GM12878 (cell line): ENCODE measurements at regions of chr4 and their contacts with region 1.

Region 1: GRCh38 chr4:180664766-180665368 is 1578.3 kb upstream of the TENM3 start:
- DNase-seq: peak; percentile 25
- ATAC-seq: peak; percentile 93
- H3K4me3 ChIP-seq: no peak overlapping the region
- H3K27ac ChIP-seq: no peak overlapping the region
- H3K4me1 ChIP-seq: no peaks in the 10 kb centered on the region
- H3K27me3 ChIP-seq: no peaks in the 10 kb centered on the region
- CTCF ChIP-seq: peak; percentile 66 to 78 (median 69); a peak in 5 of 6 replicates
- EP300 ChIP-seq: no peak
- POLR2A ChIP-seq: no peak
- RAD21 ChIP-seq: peak; percentile 64

Region 2: DNA sequence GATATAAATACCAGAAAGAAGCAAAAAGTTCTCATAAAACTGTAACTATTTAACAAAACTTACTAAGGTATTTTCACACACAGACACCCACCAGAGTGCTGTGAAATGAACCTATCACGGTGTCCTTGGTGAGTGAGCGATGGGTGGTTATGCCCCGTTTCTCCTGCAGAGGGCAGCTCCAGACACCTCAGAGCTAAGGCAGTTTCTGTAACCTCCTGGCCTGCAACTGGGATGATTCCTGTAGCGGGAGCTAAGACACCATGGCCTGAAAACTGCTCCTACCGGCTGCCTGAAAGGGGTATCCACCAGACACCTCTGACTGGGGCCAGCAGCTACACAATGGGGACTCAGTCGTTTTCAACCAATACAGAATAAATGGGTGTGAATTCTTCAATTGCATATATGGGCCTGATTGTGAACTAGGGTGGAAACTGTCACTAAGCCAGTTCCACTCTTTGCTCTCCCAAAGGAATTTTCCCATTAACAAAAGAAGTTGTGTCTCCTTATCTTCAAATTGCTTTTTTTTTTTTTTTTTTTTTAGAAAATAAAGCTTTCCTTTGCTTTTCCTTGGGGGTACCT is 797.5 kb before region 1 on chr4:
- CTCF ChIA-PET with region 1: interaction called, 14 read pairs
- POLR2A ChIA-PET with region 1: no interaction called
- RAD21 ChIA-PET with region 1: no interaction called
- SMC1A ChIA-PET with region 1: interaction called, 6 read pairs
- in situ Hi-C with region 1: loop called (anchors 10 kb)
- intact Hi-C with region 1: loop called (anchors 5 kb)
- DNase-seq: peak; percentile 16
- ATAC-seq: peak; percentile 99
- H3K4me3 ChIP-seq: no peak overlapping the region
- H3K27ac ChIP-seq: no peak overlapping the region
- H3K4me1 ChIP-seq: no peaks in the 10 kb centered on the region
- H3K27me3 ChIP-seq: no peaks in the 10 kb centered on the region
- CTCF ChIP-seq: peak; percentile 80 to 93 (median 91)
- EP300 ChIP-seq: no peak
- POLR2A ChIP-seq: no peak
- RAD21 ChIP-seq: peak; percentile 88

Region 3: GRCh38 chr4:180394312-180394711 is 270.6 kb before region 1 on chr4:
- CTCF ChIA-PET with region 1: no interaction called
- POLR2A ChIA-PET with region 1: no interaction called
- RAD21 ChIA-PET with region 1: no interaction called
- SMC1A ChIA-PET with region 1: no interaction called
- in situ Hi-C with region 1: no loop called
- intact Hi-C with region 1: no loop called
- DNase-seq: no peak
- ATAC-seq: no peak
- H3K4me3 ChIP-seq: no peak overlapping the region
- H3K27ac ChIP-seq: no peak overlapping the region
- H3K4me1 ChIP-seq: no peaks in the 10 kb centered on the region
- H3K27me3 ChIP-seq: no peaks in the 10 kb centered on the region
- CTCF ChIP-seq: no peak
- EP300 ChIP-seq: no peak
- POLR2A ChIP-seq: no peak
- RAD21 ChIP-seq: no peak

Region 4: GRCh38 chr4:180434131-180434895 is 230.6 kb before region 1 on chr4:
- CTCF ChIA-PET with region 1: no interaction called
- POLR2A ChIA-PET with region 1: no interaction called
- RAD21 ChIA-PET with region 1: no interaction called
- SMC1A ChIA-PET with region 1: no interaction called
- in situ Hi-C with region 1: no loop called
- intact Hi-C with region 1: no loop called
- DNase-seq: peak; percentile 16
- ATAC-seq: no peak; the same call in 2 of the 3 replicates
- H3K4me3 ChIP-seq: no peak overlapping the region
- H3K27ac ChIP-seq: no peak overlapping the region
- H3K4me1 ChIP-seq: no peaks in the 10 kb centered on the region
- H3K27me3 ChIP-seq: no peaks in the 10 kb centered on the region
- CTCF ChIP-seq: no peak
- EP300 ChIP-seq: no peak
- POLR2A ChIP-seq: no peak
- RAD21 ChIP-seq: no peak

Region 5: GRCh38 chr4:180449395-180449956 is 215.4 kb before region 1 on chr4:
- CTCF ChIA-PET with region 1: interaction called, 9 read pairs
- POLR2A ChIA-PET with region 1: no interaction called
- RAD21 ChIA-PET with region 1: interaction called, 7 read pairs
- SMC1A ChIA-PET with region 1: interaction called, 7 read pairs
- in situ Hi-C with region 1: no loop called
- intact Hi-C with region 1: loop called (anchors 2 kb)
- DNase-seq: no peak
- ATAC-seq: peak; percentile 95
- H3K4me3 ChIP-seq: no peak overlapping the region
- H3K27ac ChIP-seq: no peak overlapping the region
- H3K4me1 ChIP-seq: no peaks in the 10 kb centered on the region
- H3K27me3 ChIP-seq: no peaks in the 10 kb centered on the region
- CTCF ChIP-seq: peak; percentile 44 to 65 (median 61); a peak in 5 of 6 replicates
- EP300 ChIP-seq: no peak
- POLR2A ChIP-seq: no peak
- RAD21 ChIP-seq: peak; percentile 55

Region 6: DNA sequence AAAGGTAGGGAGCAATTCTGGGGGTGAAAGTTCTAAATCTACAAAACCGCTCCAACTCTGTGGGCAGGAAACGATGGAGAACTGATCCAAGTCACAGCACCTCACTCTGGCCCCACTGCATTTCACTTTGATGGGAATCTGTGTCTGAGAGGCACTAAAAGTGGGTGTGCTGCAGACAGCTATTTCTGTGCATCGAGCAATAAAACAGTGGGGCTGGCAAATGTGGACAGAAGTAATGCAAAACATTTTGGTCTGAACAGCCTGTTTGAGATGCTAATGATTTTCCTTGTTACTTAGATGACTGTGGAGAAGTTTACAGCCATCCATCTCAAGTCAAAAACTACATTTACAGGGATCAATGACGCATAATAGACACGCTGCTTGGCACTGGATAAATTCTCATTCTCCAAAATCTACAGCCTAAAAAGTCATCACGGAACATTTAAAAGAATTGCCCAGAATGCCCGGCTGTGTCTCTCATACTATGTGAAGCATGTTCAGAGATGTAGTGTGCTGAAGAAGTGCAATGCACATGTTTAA is 93.3 kb before region 1 on chr4:
- CTCF ChIA-PET with region 1: no interaction called
- POLR2A ChIA-PET with region 1: no interaction called
- RAD21 ChIA-PET with region 1: no interaction called
- SMC1A ChIA-PET with region 1: no interaction called
- in situ Hi-C with region 1: no loop called
- intact Hi-C with region 1: no loop called
- DNase-seq: no peak
- ATAC-seq: no peak
- H3K4me3 ChIP-seq: no peak overlapping the region
- H3K27ac ChIP-seq: no peak overlapping the region
- H3K4me1 ChIP-seq: no peaks in the 10 kb centered on the region
- H3K27me3 ChIP-seq: no peaks in the 10 kb centered on the region
- CTCF ChIP-seq: no peak
- EP300 ChIP-seq: no peak
- POLR2A ChIP-seq: no peak
- RAD21 ChIP-seq: no peak

Region 7: GRCh38 chr4:180650273-180650672 is 14.6 kb before region 1 on chr4:
- CTCF ChIA-PET with region 1: interaction called, 52 read pairs
- POLR2A ChIA-PET with region 1: no interaction called
- RAD21 ChIA-PET with region 1: interaction called, 10 read pairs
- SMC1A ChIA-PET with region 1: interaction called, 5 read pairs
- in situ Hi-C with region 1: no loop called
- intact Hi-C with region 1: no loop called
- DNase-seq: no peak
- ATAC-seq: peak; percentile 93
- H3K4me3 ChIP-seq: no peak overlapping the region
- H3K27ac ChIP-seq: no peak overlapping the region
- H3K4me1 ChIP-seq: no peaks in the 10 kb centered on the region
- H3K27me3 ChIP-seq: no peaks in the 10 kb centered on the region
- CTCF ChIP-seq: no peak
- EP300 ChIP-seq: no peak
- POLR2A ChIP-seq: no peak
- RAD21 ChIP-seq: no peak

Region 8: DNA sequence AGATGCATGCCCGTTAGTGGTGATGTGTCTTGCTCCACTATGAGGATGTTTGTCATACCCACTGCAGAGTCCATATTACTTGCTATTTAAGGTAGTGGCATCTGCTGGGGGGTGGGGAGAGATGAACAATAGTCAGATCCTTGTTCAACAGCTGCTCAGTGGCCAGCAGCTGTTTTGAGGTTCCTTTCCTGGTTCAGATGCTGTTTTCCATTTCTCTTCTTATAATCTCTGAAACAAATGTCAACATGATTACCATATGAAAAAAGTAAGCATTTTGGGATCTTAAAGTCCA is 10.4 kb after region 1 on chr4:
- CTCF ChIA-PET with region 1: interaction called, 14 read pairs
- POLR2A ChIA-PET with region 1: no interaction called
- RAD21 ChIA-PET with region 1: no interaction called
- SMC1A ChIA-PET with region 1: interaction called, 7 read pairs
- in situ Hi-C with region 1: no loop called
- intact Hi-C with region 1: no loop called
- DNase-seq: no peak
- ATAC-seq: no peak
- H3K4me3 ChIP-seq: no peak overlapping the region
- H3K27ac ChIP-seq: no peak overlapping the region
- H3K4me1 ChIP-seq: no peaks in the 10 kb centered on the region
- H3K27me3 ChIP-seq: no peaks in the 10 kb centered on the region
- CTCF ChIP-seq: no peak
- EP300 ChIP-seq: no peak
- POLR2A ChIP-seq: no peak
- RAD21 ChIP-seq: no peak

Region 9: GRCh38 chr4:180840142-180840541 is 175.3 kb after region 1 on chr4:
- CTCF ChIA-PET with region 1: interaction called, 4 read pairs
- POLR2A ChIA-PET with region 1: no interaction called
- RAD21 ChIA-PET with region 1: no interaction called
- SMC1A ChIA-PET with region 1: no interaction called
- in situ Hi-C with region 1: no loop called
- intact Hi-C with region 1: loop called (anchors 10 kb)
- DNase-seq: no peak
- ATAC-seq: peak; percentile 73
- H3K4me3 ChIP-seq: no peak overlapping the region
- H3K27ac ChIP-seq: no peak overlapping the region
- H3K4me1 ChIP-seq: no peaks in the 10 kb centered on the region
- H3K27me3 ChIP-seq: no peaks in the 10 kb centered on the region
- CTCF ChIP-seq: peak in 2 of 3 experiments; percentile 9 to 14; a peak in 1 of 6 replicates
- EP300 ChIP-seq: no peak
- POLR2A ChIP-seq: no peak
- RAD21 ChIP-seq: no peak

Region 10: GRCh38 chr4:181528570-181529184 is 863.8 kb after region 1 on chr4:
- CTCF ChIA-PET with region 1: interaction called, 10 read pairs
- POLR2A ChIA-PET with region 1: no interaction called
- RAD21 ChIA-PET with region 1: no interaction called
- SMC1A ChIA-PET with region 1: interaction called, 3 read pairs
- in situ Hi-C with region 1: no loop called
- intact Hi-C with region 1: loop called (anchors 10 kb)
- DNase-seq: peak; percentile 8
- ATAC-seq: peak; percentile 86
- H3K4me3 ChIP-seq: no peak overlapping the region
- H3K27ac ChIP-seq: no peak overlapping the region
- H3K4me1 ChIP-seq: no peaks in the 10 kb centered on the region
- H3K27me3 ChIP-seq: no peaks in the 10 kb centered on the region
- CTCF ChIP-seq: peak; percentile 84 to 90 (median 86)
- EP300 ChIP-seq: no peak
- POLR2A ChIP-seq: no peak
- RAD21 ChIP-seq: peak; percentile 92